Activated T-helper 1 cell treated with anti-CD3 and anti-CD28 coated beads, Interleukin-12 subunit alpha, Interleukin-12 subunit beta, Interleukin-2, Interleukin-4 antibody, amounts not matched to agents 30 ng/mL and 10 ng/mL and 1 ng/mL, durations not matched to agents 14 hours and 24 hours and 36 hours (primary cell): ENCODE measurements at regions of chr7 and their contacts with region 1.

Region 1: DNA sequence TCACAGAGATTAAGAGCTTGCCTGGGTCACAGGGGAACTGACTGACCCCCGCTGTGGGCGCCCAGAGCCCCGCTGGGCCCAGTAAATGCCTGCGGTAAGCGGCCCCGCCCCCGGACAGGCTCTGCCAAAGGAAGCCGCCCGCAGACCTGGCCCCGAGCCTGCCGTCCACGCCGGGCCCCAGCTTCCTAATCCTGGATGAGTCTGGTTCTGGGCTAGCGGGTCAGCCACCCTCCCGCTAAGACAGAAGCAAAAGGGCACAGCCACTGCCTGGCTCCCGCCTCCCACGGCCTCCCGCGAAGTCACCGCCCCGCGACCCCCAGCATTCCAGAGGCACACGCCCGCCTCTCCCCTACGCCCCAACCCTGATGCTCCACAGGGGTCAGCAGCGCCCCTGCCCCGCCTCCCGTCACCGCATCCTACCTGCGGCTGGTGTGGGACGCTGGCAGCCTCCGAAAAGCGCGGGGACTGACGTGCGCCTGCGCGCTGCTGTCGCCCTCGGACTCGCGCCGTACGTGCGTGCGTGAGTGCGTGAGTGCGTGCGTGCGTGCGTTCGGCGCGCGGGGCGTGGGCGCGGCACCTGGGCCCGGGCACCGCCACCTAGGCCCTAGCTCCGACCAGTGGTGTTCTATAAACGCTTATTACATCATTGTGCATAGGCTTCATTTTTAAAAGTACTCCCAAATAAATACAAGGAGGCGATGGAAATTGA is at the start of gene FIGNL1:
- DNase-seq: peak; percentile 81
- H3K4me3 Mint-ChIP-seq: peak within 1 kb of the TSS; percentile 92
- H3K27ac Mint-ChIP-seq: peak within 1 kb of the TSS; percentile 90
- H3K4me1 Mint-ChIP-seq: peaks cover 42% of the 10 kb centered on the region
- H3K27me3 Mint-ChIP-seq: peaks cover 15% of the 10 kb centered on the region
- total RNA-seq, gene FIGNL1: 41.6 and 45.4 TPM in 2 replicates

Region 2: DNA sequence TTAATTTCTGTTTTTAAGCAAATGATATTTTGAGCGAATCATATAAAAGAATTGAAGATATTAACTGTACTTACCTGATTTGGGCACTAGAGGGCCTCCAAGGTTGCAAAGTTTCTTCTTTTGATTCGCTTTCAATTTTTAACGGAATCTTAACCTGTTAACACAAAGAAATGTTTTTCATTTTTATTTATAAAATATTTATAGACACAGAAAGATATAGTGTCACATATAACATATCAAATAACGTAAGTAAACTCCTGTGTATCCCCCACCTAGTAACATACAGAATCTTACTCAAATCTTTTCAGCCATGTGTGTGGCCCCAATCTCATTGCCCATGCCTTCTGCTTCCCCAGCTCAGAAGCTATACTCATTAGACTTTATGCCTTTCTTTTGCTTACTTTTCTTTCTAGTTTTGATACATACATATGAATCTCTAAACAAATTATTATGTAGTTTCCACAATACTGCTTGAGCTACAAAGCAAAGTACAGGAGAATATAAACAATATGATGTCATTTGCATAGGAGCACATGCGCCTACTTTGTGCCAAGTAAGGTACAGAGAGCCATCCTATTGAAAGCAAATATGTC is 307.5 kb before region 1 on chr7:
- intact Hi-C with region 1: loop called (anchors 1 kb)
- DNase-seq: no peak
- H3K4me3 Mint-ChIP-seq: peak overlapping the region; percentile 27
- H3K27ac Mint-ChIP-seq: peak overlapping the region; percentile 2
- H3K4me1 Mint-ChIP-seq: peaks cover 34% of the 10 kb centered on the region
- H3K27me3 Mint-ChIP-seq: peaks cover 11% of the 10 kb centered on the region

Region 3: DNA sequence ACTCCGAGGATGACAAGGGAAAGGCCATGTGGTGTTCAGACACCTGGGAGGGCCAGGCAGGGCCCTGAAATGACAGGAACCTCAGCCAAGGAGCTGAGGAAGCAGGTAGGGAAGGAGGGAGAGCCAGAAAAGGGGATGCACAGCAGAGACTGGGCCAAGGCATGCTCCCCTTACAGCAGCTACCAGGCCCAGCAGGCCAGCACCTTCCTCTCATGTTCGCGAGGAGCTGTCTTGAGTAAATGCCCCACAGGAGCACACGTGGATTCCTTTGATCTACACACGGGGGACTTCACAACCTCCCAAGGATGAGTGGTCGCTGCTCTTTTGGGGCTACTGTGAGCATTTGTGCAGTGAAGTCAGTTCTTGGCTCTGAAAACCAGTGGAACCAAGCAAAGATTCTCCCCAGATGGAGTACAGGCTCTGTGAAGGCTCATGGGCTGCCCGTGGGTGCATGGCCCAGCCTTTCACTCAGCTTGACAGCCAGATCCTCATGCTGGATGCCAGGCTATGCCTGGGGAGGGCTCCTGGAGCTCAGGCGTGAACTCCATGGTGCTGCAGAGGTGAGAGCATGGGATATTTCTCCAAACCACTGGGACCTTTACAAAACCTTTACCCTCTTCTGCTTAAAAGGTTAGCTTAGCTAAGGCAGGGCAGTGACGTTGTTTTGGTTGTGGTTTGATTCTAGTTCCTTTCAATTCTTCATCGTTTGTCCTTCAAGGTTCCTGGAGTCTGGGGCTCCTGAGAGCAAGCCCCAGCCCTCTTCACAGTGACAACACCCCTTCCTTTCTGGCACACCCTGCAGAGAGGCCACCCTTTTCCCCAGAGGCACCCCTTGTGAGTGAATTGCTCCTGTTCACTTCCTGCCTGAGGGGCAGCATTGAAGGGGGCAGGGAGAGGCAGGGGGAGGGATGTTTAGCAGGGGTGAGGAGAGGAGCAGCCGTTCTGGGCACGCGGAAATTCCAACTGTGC is 282.8 kb before region 1 on chr7:
- intact Hi-C with region 1: no loop called
- DNase-seq: no peak
- H3K4me3 Mint-ChIP-seq: peak overlapping the region; percentile 19
- H3K27ac Mint-ChIP-seq: peak overlapping the region; percentile 72
- H3K4me1 Mint-ChIP-seq: peaks cover 52% of the 10 kb centered on the region
- H3K27me3 Mint-ChIP-seq: peaks cover 4% of the 10 kb centered on the region

Region 4: DNA sequence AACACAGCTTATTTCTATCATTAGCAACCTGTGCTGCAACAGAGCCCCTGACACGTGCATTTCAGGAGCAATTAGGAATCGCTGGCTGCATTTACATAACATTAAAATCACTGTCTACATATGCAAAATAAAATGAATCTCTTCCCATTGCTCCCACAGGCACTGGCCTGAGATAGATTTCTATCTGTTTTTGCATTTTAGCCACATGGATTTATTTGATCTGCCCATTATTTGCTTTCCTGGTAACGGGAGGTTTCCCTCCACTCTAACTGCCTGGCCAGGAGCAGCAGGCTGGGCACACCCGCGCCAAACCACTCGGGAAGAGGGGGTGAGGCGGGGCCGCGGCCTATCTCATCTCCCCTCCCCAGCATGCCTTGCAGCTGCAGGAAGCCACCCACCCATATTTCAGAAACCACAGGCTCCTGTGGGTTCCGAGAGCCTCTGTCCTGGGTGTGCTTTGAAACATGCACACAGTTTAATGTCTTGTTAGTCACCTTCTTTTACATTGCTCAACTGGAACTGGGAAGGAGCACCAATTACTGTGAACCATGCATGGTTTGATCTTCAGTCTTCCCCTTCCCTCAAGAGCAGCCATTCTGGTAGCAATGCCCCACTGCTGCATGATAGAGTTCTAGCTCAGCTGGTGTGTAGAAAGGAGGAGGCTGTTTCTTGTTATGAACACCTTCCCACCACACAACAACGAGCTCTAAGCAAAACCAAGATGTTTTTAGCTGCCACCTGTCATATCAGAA is 183.2 kb before region 1 on chr7:
- intact Hi-C with region 1: loop called (anchors 1 kb)
- DNase-seq: peak; percentile 82
- H3K4me3 Mint-ChIP-seq: peak overlapping the region; percentile 70
- H3K27ac Mint-ChIP-seq: peak overlapping the region; percentile 98
- H3K4me1 Mint-ChIP-seq: peaks cover 89% of the 10 kb centered on the region
- H3K27me3 Mint-ChIP-seq: no peaks in the 10 kb centered on the region

Region 5: DNA sequence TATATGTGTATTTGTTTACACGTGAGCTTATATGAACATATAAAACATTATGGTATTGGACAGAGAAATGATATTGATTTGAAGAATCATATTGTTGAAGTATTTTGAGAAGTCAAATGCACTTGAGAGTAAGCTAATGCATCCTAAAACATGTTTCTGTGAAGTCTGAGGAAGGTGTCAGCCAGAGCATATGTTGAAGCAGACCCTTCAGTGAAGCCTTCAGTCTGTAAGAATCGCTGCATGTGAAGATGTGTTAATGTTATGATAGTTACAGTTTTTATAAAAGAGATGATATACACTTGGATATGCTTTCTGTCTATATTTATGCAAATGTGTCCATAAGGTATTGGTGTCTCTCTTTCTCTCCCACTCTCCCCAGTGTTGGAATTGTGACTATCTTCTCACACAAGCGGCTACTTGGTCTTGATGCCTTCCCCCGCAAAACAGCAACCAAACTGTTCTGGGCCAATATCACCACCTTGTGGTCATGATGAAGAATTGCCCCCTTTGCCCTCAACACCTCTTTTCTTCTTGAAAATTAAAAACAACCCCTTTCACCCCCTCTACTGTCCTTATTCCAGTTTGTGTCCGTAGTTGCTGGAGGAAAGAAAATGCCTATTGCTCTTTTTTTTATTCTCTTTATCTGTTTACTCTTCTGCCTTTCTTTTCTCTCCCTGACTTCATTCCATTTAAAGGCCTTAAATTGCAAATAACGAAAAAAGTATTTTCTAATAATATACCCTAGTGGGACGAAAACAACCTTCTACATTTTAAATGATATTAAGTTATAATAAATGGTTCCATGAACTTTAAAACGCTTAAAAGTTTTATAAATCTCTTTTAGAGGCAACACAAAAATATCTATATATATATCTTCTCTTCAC is 80.7 kb before region 1 on chr7:
- intact Hi-C with region 1: loop called (anchors 5 kb)
- DNase-seq: no peak
- H3K4me3 Mint-ChIP-seq: peak overlapping the region; percentile 45
- H3K27ac Mint-ChIP-seq: peak overlapping the region; percentile 85
- H3K4me1 Mint-ChIP-seq: peaks cover 100% of the 10 kb centered on the region
- H3K27me3 Mint-ChIP-seq: no peaks in the 10 kb centered on the region

Region 6: DNA sequence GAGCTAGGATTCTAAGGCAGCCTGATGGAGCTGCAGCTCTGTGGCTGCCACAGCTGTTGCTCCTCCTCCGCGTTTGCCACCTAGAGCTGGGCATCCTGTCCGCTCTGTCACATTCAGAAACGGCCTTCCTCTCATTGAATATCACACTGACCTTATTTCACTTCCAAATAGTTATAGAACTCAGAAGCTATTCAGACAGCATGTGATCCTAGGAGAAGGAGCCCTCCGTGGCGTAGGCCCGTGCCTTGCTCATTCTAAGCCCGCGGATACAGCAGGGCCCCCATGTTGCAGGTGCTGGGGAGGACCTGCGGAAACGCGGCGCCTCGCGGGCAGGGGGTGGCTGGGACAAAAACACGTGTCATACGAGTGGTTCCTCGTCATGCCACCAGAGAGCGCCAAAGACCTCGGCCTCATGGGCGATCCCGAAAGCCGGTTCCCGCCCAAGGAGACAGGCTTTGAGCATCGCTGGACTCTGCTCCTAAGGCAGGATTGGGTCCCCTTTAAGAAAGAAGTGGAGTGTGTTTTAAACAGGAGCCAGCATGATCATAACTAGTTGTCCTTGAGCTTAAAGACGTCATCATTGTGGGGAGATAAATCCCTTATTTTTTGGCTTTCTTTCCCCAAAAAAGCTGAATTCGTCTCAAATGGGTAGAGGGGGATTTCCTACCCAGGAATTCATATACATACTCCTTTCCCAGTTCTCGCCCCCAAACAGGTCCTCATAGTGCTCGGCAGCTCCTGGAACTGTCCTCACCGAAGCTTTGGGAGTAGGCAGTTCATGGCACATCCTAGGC is 18.0 kb after region 1 on chr7:
- intact Hi-C with region 1: loop called (anchors 1 kb)
- DNase-seq: peak; percentile 69
- H3K4me3 Mint-ChIP-seq: no peak overlapping the region
- H3K27ac Mint-ChIP-seq: no peak overlapping the region
- H3K4me1 Mint-ChIP-seq: peaks cover 12% of the 10 kb centered on the region
- H3K27me3 Mint-ChIP-seq: peaks cover 12% of the 10 kb centered on the region

Region 7: DNA sequence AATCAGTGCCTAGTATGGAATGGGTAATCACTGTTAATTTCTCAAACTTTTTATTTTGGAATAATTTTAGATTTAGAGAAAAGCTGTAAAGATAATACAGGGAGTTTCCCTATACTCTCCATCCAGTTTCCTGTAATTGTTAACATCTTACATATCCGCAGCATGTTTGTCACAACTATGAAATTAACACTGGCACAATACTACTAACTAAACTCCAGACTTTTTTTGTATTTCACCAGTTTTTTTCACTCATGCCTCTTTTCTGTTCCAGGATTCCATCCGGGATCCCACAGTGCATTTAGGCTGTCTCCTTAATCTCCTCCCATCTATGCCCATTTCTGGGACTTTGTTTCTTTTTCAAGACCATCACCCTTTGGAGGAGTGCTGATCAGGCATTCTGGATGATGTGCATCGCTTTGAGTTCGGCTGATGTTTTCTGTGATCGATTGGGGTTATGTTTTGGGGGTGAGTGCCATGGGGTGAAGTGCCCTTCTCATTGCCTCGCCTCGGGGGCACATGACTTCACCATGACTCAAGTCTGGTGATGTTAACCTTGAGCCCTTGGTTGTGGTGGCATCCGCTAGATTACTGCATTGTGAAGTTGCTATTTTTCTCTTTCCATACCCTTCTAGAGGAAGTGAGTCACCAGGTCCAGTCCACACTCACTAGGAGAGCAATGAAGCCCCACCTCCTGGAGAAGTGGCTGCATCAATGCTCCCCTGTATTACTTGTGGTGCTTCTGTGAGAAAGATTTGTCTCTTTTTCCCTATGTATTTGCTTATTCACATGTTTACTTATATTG is 376.5 kb after region 1 on chr7:
- intact Hi-C with region 1: loop called (anchors 1 kb)
- DNase-seq: peak; percentile 33
- H3K4me3 Mint-ChIP-seq: peak overlapping the region; percentile 47
- H3K27ac Mint-ChIP-seq: peak overlapping the region; percentile 77
- H3K4me1 Mint-ChIP-seq: peaks cover 26% of the 10 kb centered on the region
- H3K27me3 Mint-ChIP-seq: peaks cover 9% of the 10 kb centered on the region